Left lung (tissue), 14 donors: ENCODE measurements at regions of chr10 and their contacts with region 1.

Region 1: DNA sequence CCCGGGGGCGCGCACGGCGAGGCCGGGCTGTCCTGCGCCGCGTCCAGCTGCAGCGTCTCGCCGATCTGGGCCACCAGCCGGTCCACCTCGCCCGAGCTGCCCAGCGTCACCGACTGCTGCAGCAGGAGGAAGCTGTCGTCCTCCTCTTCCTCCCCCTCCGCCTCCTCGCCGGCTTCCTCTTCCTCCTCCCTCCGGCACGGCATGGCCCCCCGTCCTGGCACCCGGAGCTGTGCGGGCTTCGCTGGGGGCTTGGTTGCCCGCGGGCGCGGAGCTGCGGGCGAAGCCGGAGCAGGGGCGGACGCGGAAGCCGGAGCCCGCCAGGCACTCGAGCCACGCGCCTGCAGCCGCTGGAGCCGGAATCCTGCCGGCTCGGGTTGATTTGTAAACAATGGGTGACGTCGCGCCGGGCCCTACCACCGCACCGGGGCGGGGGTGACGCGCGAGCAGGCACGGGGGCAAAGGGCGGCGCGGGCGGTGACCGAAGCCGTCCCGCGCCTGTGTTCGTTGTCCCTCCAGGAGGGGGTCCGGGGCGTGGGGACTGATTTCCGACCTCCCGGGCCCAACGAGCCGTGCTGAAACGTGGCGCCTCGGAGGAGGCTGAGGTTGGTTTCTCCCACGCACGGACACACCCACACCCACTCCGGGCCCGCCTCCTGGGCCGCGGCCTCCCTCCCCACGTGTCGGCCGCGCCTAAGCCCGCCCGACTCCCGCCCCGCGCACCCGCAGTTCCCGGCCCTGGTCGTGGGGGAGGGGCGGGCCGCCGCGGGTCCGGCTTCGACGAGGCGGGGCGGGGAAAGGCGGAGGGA is at the start of gene FRAT2:
- DNase-seq: peak; percentile 92 to 98 (median 95)
- ATAC-seq: peak; percentile 92
- H3K4me3 ChIP-seq: peak within 1 kb of the TSS; percentile 80 to 91
- H3K27ac ChIP-seq: peak within 1 kb of the TSS; percentile 95 to 99
- H3K4me1 ChIP-seq: peaks cover 17 to 58% of the 10 kb centered on the region in 2 donors
- H3K27me3 ChIP-seq: no peaks in the 10 kb centered on the region
- CTCF ChIP-seq: no peak
- polyA plus RNA-seq, gene FRAT2: 7.4 to 9.3 (median 8.5) TPM

Region 2: DNA sequence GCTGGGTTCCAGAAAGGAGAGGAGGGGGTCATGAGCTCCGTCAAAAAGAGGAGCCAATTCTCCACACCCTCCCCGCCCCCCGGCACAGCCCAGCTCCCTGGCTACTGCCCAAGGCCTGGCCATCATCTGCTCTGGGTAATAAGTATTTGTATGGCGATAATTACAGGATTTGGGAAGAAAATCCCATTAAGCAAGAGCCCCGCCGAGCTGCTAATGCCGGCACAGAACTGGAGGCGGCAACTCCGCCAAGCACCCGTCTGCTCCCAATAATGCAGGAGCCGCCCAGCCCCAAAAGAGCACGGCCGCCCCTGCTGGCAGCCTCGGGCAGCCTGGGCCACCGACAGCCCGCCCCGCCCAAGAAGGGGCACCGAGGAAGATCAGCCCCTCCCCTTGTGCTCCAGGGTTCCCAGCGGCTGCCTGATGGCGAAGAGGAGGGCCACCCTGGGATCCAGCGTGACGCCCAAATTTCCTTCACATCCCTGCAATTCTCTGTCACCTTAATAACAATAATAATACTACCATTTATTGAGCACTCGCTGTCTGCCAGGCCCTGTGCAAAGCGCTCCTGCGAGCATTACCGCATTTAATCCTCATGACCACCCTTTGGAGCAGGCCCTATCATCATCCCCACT is 154.7 kb before region 1 on chr10:
- intact Hi-C with region 1: no loop called
- DNase-seq: peak in 2 of 4 donors; percentile 47 to 77
- ATAC-seq: no peak
- H3K4me3 ChIP-seq: no peak overlapping the region
- H3K27ac ChIP-seq: no peak overlapping the region
- H3K4me1 ChIP-seq: no peaks in the 10 kb centered on the region
- H3K27me3 ChIP-seq: peaks cover 15 to 59% of the 10 kb centered on the region in 2 donors
- CTCF ChIP-seq: no peak

Region 3: GRCh38 chr10:97278491-97278989 is 56.0 kb before region 1 on chr10:
- intact Hi-C with region 1: loop called in 1 of 2 experiments (anchors 5 kb)
- DNase-seq: peak in 2 of 4 donors; percentile 67 to 82
- ATAC-seq: peak; percentile 96
- H3K4me3 ChIP-seq: no peak overlapping the region
- H3K27ac ChIP-seq: peak overlapping the region; percentile 5 to 67
- H3K4me1 ChIP-seq: peaks cover 8 to 24% of the 10 kb centered on the region in 2 donors
- H3K27me3 ChIP-seq: no peaks in the 10 kb centered on the region
- CTCF ChIP-seq: peak; percentile 39 to 60

Region 4: DNA sequence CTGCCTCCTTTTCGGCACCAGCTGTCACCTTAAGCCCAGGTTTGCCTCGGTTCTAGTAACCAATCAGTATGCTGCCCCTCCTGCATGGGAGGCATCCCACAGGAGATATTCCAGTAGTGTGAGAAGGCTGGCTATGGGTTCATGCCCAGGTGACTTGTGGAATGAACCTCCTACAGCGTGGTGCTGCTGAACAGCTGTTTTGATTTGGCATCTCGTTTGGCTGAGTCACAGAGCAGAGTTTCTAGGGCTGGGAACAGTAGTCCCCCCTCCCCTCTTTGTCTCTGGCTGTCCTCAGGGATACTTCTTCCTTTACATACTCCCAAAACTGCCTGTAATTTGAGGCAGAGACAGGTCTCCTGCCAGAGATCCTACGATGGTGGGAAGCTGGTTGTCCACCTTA is 816.0 kb after region 1 on chr10:
- intact Hi-C with region 1: no loop called
- DNase-seq: no peak
- ATAC-seq: no peak
- H3K4me3 ChIP-seq: no peak overlapping the region
- H3K27ac ChIP-seq: no peak overlapping the region
- H3K4me1 ChIP-seq: peaks cover 0 to 12% of the 10 kb centered on the region in 2 donors
- H3K27me3 ChIP-seq: no peaks in the 10 kb centered on the region
- CTCF ChIP-seq: no peak